HEK293 (cell line): ENCODE measurements at regions of chr19 and their contacts with region 1.

Region 1: GRCh38 chr19:17496337-17496997 is 15.0 kb upstream of the PGLS start:
- H3K4me3 ChIP-seq: no peak overlapping the region
- H3K27ac ChIP-seq: no peak overlapping the region
- H3K4me1 ChIP-seq: no peaks in the 10 kb centered on the region
- CTCF ChIP-seq: peak; percentile 98

Region 2: GRCh38 chr19:17441241-17442021 is 55.0 kb before region 1 on chr19:
- CTCF ChIA-PET with region 1: interaction called, 12 read pairs
- POLR2A ChIA-PET with region 1: no interaction called
- H3K4me3 ChIP-seq: no peak overlapping the region
- H3K27ac ChIP-seq: no peak overlapping the region
- H3K4me1 ChIP-seq: no peaks in the 10 kb centered on the region
- CTCF ChIP-seq: peak; percentile 83

Region 3: DNA sequence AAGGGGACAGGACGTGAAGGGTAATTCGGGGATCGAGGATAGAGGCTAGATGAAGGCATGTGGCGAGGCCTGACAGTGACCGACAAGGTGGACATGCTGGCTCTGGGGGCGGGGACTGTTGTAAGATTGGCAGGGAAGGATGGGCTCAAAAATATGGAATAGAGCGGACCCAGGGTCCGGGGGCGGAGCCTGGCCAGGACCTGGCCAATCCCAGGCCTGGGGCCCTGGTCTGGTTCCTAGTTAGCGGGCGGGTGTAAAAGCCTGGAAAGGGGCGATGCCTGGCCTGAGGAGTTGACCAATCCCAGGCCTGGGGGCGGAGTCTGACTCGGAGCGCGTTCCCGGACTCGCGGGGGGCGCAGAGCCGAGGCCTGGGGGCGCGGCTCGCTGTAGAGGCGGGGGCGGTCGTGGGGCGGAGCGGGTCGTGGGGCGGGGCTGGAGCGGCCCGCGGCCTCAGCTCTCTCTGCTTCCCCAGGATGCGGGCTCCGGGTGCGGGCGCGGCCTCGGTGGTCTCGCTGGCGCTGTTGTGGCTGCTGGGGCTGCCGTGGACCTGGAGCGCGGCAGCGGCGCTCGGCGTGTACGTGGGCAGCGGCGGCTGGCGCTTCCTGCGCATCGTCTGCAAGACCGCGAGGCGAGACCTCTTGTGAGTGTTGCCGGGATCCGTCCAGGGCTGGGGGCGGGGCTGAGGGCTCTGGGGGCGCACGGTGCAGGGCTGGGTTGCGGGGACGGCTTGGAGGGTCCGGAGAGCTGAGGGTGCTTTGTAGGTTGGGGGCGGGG is 26.2 kb before region 1 on chr19 and contains the start of gene SLC27A1:
- CTCF ChIA-PET with region 1: interaction called, 31 read pairs
- POLR2A ChIA-PET with region 1: no interaction called
- H3K4me3 ChIP-seq: peak within 1 kb of the TSS; percentile 58
- H3K27ac ChIP-seq: no peak within 1 kb of the TSS
- H3K4me1 ChIP-seq: peaks cover 6% of the 10 kb centered on the region; the same call in 1 of the 2 replicates
- CTCF ChIP-seq: peak; percentile 27; the same call in 1 of the 2 replicates

Region 4: GRCh38 chr19:17511724-17512573 is 15.5 kb after region 1 on chr19:
- CTCF ChIA-PET with region 1: interaction called, 21 read pairs
- POLR2A ChIA-PET with region 1: no interaction called
- H3K4me3 ChIP-seq: peak overlapping the region; percentile 74
- H3K27ac ChIP-seq: peak overlapping the region; percentile 73
- H3K4me1 ChIP-seq: no peaks in the 10 kb centered on the region
- CTCF ChIP-seq: peak; percentile 77

Region 5: GRCh38 chr19:17572640-17573039 is 76.2 kb after region 1 on chr19:
- CTCF ChIA-PET with region 1: interaction called, 27 read pairs
- POLR2A ChIA-PET with region 1: no interaction called
- H3K4me3 ChIP-seq: no peak overlapping the region
- H3K27ac ChIP-seq: no peak overlapping the region
- H3K4me1 ChIP-seq: no peaks in the 10 kb centered on the region
- CTCF ChIP-seq: no peak